ENCODE measurements at regions of chr12 and their contacts with region 1.

Region 1: DNA sequence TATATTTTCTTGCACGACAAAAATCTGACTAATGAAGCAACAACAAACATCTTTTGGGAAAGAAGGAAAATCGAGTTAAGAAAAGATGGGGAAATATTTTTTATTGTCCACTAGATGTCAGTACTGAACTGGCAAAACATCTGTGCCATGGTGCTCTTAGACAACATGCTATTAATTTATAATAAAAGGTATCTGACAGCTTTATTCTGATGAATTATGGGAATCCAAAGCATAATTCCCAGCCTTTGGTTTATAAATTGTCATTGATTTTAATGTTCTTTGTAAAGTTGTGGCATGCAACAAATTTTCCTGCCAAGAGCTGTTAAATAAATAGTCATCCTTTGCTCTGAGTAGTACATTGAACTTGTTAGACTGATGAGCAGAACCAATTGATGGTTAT is 231.2 kb downstream of the ETNK1 start:
- DNase-seq: peak; percentile 1
- H3K4me3 ChIP-seq: no peak overlapping the region
- H3K27ac ChIP-seq: no peak overlapping the region
- H3K27me3 ChIP-seq: no peaks in the 10 kb centered on the region
- CTCF ChIP-seq: peak; percentile 70

Region 2: GRCh38 chr12:22981711-22982110 is 125.5 kb after region 1 on chr12:
- CTCF ChIA-PET with region 1: interaction called, 25 read pairs
- POLR2A ChIA-PET with region 1: no interaction called
- DNase-seq: no peak
- H3K4me3 ChIP-seq: no peak overlapping the region
- H3K27ac ChIP-seq: no peak overlapping the region
- H3K27me3 ChIP-seq: peaks cover 2% of the 10 kb centered on the region
- CTCF ChIP-seq: peak; percentile 16; the same call in 1 of the 2 replicates

Region 3: GRCh38 chr12:23055004-23055403 is 198.8 kb after region 1 on chr12:
- CTCF ChIA-PET with region 1: interaction called, 32 read pairs
- POLR2A ChIA-PET with region 1: no interaction called
- DNase-seq: no peak
- H3K4me3 ChIP-seq: no peak overlapping the region
- H3K27ac ChIP-seq: no peak overlapping the region
- H3K27me3 ChIP-seq: no peaks in the 10 kb centered on the region
- CTCF ChIP-seq: peak; percentile 52